HepG2 (cell line): ENCODE measurements at regions of chr6 and their contacts with region 1.

Region 1: GRCh38 chr6:41072676-41073623 is at the start of gene NFYA:
- DNase-seq: peak; percentile 99
- ATAC-seq: peak; percentile 90
- H3K4me3 ChIP-seq: peak within 1 kb of the TSS; percentile 97 to 100 (median 98)
- H3K27ac ChIP-seq: peak within 1 kb of the TSS; percentile 97
- H3K4me1 ChIP-seq: peaks cover 43% of the 10 kb centered on the region
- H3K27me3 ChIP-seq: no peaks in the 10 kb centered on the region; a peak in 2 of 5 replicates
- CTCF ChIP-seq: peak; percentile 13; the same call in 1 of the 2 replicates
- EP300 ChIP-seq: no peak
- POLR2A ChIP-seq: peak; percentile 70 to 82
- RAD21 ChIP-seq: peak; percentile 82
- total RNA-seq, gene NFYA: 22.9 and 52.0 TPM in 2 replicates

Region 2: GRCh38 chr6:40719671-40720374 is 353.1 kb before region 1 on chr6:
- CTCF ChIA-PET with region 1: no interaction called
- POLR2A ChIA-PET with region 1: no interaction called
- in situ Hi-C with region 1: no loop called
- intact Hi-C with region 1: no loop called
- DNase-seq: no peak
- ATAC-seq: no peak
- H3K4me3 ChIP-seq: no peak overlapping the region
- H3K27ac ChIP-seq: no peak overlapping the region
- H3K4me1 ChIP-seq: peaks cover 25% of the 10 kb centered on the region
- H3K27me3 ChIP-seq: peaks cover 2 to 13% of the 10 kb centered on the region in 2 experiments; a peak in 2 of 5 replicates
- CTCF ChIP-seq: no peak
- EP300 ChIP-seq: no peak
- POLR2A ChIP-seq: no peak
- RAD21 ChIP-seq: no peak

Region 3: GRCh38 chr6:40957616-40958492 is 115.1 kb before region 1 on chr6:
- CTCF ChIA-PET with region 1: no interaction called
- POLR2A ChIA-PET with region 1: interaction called, 4 read pairs
- in situ Hi-C with region 1: no loop called
- intact Hi-C with region 1: loop called (anchors 2 kb)
- DNase-seq: peak; percentile 88
- ATAC-seq: peak; percentile 84
- H3K4me3 ChIP-seq: peak overlapping the region in 1 of 3 experiments; percentile 4; a peak in 1 of 6 replicates
- H3K27ac ChIP-seq: no peak overlapping the region
- H3K4me1 ChIP-seq: peaks cover 82% of the 10 kb centered on the region
- H3K27me3 ChIP-seq: no peaks in the 10 kb centered on the region
- CTCF ChIP-seq: no peak
- EP300 ChIP-seq: peak in 1 of 2 experiments; percentile 2; a peak in 1 of 4 replicates
- POLR2A ChIP-seq: no peak
- RAD21 ChIP-seq: no peak

Region 4: DNA sequence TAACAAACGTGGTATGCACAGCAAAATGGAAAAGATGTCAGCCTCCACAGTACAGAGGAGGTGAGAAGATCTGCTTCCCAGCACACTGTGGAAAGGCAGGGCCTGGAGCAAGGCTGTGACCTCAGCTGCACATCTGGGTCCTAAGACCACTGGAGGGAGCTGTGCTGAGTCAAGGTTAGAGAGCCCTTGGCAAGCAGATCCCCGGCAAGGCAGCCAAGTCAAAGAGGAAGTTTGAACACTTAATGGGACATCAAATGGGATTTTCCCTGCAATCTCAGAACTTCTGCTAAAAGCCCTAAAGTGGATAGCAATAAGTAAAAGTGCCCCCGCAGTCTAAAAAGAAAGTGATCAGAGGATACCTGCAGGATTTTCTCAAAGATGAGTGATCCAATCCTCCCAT is 73.4 kb before region 1 on chr6:
- CTCF ChIA-PET with region 1: no interaction called
- POLR2A ChIA-PET with region 1: interaction called, 36 read pairs
- in situ Hi-C with region 1: loop called (anchors 5 kb)
- intact Hi-C with region 1: no loop called
- DNase-seq: peak; percentile 80
- ATAC-seq: peak; percentile 82
- H3K4me3 ChIP-seq: no peak overlapping the region
- H3K27ac ChIP-seq: no peak overlapping the region
- H3K4me1 ChIP-seq: peaks cover 74% of the 10 kb centered on the region
- H3K27me3 ChIP-seq: no peaks in the 10 kb centered on the region
- CTCF ChIP-seq: peak; percentile 89
- EP300 ChIP-seq: peak in 1 of 2 experiments; percentile 6; a peak in 1 of 4 replicates
- POLR2A ChIP-seq: no peak
- RAD21 ChIP-seq: peak; percentile 46; the same call in 1 of the 2 replicates

Region 5: DNA sequence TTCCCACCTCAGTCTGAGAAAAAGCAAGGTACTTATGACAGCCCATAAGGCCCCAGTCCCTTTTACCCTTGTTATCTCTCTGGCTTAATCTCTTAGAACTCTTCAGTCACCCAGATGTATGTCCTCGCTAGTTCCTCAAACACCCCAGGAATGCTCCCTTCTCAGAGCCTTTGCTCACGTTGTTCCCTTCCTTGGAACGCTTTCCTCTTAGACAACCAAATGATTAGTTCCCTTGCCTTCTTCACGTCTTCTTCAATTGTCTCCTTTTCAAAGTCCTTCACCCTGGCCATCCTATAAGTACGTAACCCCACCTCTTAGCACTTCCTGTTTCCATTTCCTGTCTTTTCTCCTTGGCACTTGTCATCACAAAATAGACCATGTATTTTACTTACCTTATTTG is 21.1 kb before region 1 on chr6:
- CTCF ChIA-PET with region 1: no interaction called
- POLR2A ChIA-PET with region 1: interaction called, 18 read pairs
- in situ Hi-C with region 1: no loop called
- intact Hi-C with region 1: no loop called
- DNase-seq: no peak
- ATAC-seq: no peak
- H3K4me3 ChIP-seq: no peak overlapping the region
- H3K27ac ChIP-seq: no peak overlapping the region
- H3K4me1 ChIP-seq: peaks cover 66% of the 10 kb centered on the region
- H3K27me3 ChIP-seq: no peaks in the 10 kb centered on the region
- CTCF ChIP-seq: no peak
- EP300 ChIP-seq: no peak
- POLR2A ChIP-seq: no peak
- RAD21 ChIP-seq: no peak